Esophagus squamous epithelium (tissue), 5 donors: ENCODE measurements at regions of chr2 and their contacts with region 1.

Region 1: DNA sequence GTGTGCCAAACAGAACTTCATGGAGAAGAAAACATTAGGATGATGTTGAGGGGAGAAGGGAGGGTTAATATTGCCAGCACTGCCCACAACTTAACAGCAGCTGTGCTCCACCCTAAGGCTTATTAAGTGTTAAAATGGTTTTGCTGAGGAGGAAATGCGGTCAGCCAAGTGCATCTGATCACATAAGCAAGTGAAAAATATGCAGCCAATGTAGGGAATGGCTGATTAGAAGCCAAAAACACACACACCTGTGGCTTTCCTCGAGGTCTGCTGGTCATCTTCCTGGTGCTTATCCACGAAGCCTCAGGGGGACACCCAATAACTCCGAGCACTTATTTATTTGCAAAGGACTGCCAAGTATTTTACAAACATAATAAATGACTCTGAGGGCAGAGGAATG is 66.3 kb upstream of the GPR45 start:
- DNase-seq: no peak
- H3K4me3 ChIP-seq: no peak overlapping the region
- H3K27ac ChIP-seq: no peak overlapping the region
- H3K4me1 ChIP-seq: peaks cover 0 to 5% (median 0%) of the 10 kb centered on the region in 3 donors
- H3K27me3 ChIP-seq: peaks cover 0 to 67% (median 0%) of the 10 kb centered on the region in 4 donors
- CTCF ChIP-seq: no peak
- POLR2A ChIP-seq: no peak

Region 2: GRCh38 chr2:105068875-105069274 is 106.4 kb before region 1 on chr2:
- intact Hi-C with region 1: no loop called
- DNase-seq: no peak
- H3K4me3 ChIP-seq: no peak overlapping the region
- H3K27ac ChIP-seq: no peak overlapping the region
- H3K4me1 ChIP-seq: no peaks in the 10 kb centered on the region
- H3K27me3 ChIP-seq: no peaks in the 10 kb centered on the region
- CTCF ChIP-seq: no peak
- POLR2A ChIP-seq: no peak

Region 3: GRCh38 chr2:105224444-105224843 is 49.2 kb after region 1 on chr2:
- intact Hi-C with region 1: loop called (anchors 2 kb)
- DNase-seq: no peak
- H3K4me3 ChIP-seq: no peak overlapping the region
- H3K27ac ChIP-seq: no peak overlapping the region
- H3K4me1 ChIP-seq: no peaks in the 10 kb centered on the region
- H3K27me3 ChIP-seq: peaks cover 0 to 9% (median 0%) of the 10 kb centered on the region in 4 donors
- CTCF ChIP-seq: no peak
- POLR2A ChIP-seq: no peak